Activated T-helper 1 cell treated with anti-CD3 and anti-CD28 coated beads, Interleukin-12 subunit alpha, Interleukin-12 subunit beta, Interleukin-2, Interleukin-4 antibody, amounts not matched to agents 30 ng/mL and 10 ng/mL and 1 ng/mL, durations not matched to agents 14 hours and 24 hours and 36 hours (primary cell): ENCODE measurements at regions of chr6 and their contacts with region 1.

Region 1: GRCh38 chr6:32700391-32701040 is 34.1 kb upstream of the HLA-DQB1 start:
- DNase-seq: no peak
- H3K4me3 Mint-ChIP-seq: no peak overlapping the region
- H3K27ac Mint-ChIP-seq: no peak overlapping the region
- H3K4me1 Mint-ChIP-seq: no peaks in the 10 kb centered on the region
- H3K27me3 Mint-ChIP-seq: peaks cover 43% of the 10 kb centered on the region

Region 2: DNA sequence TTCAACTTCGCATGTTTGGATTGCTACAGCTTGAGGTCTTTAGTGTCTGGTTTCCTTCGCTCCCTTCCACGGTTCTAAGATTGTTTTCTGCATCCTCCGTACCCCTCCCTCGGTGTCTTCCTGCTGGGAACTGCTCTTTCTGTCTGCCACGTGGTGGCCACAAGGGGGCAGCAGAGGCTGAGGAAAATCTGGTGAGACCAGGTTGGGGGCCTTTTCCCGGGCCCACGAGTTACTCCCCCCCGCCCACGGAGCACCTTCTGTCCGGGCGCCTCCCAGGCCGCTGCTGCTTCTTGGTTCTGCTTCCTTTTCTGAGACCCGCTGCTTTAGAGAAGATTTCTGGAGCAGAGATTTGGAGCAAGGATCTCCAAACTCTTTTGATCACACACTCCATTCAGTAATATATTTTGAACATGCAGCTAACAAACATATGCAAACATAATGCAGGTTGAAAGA is 455.5 kb before region 1 on chr6:
- intact Hi-C with region 1: loop called (anchors 1 kb)
- DNase-seq: peak; percentile 57
- H3K4me3 Mint-ChIP-seq: peak overlapping the region; percentile 9
- H3K27ac Mint-ChIP-seq: no peak overlapping the region
- H3K4me1 Mint-ChIP-seq: peaks cover 27% of the 10 kb centered on the region
- H3K27me3 Mint-ChIP-seq: peaks cover 12% of the 10 kb centered on the region

Region 3: GRCh38 chr6:32432050-32432450 is 268.5 kb before region 1 on chr6:
- intact Hi-C with region 1: loop called (anchors 1 kb)
- DNase-seq: no peak
- H3K4me3 Mint-ChIP-seq: no peak overlapping the region
- H3K27ac Mint-ChIP-seq: no peak overlapping the region
- H3K4me1 Mint-ChIP-seq: no peaks in the 10 kb centered on the region
- H3K27me3 Mint-ChIP-seq: peaks cover 31% of the 10 kb centered on the region

Region 4: DNA sequence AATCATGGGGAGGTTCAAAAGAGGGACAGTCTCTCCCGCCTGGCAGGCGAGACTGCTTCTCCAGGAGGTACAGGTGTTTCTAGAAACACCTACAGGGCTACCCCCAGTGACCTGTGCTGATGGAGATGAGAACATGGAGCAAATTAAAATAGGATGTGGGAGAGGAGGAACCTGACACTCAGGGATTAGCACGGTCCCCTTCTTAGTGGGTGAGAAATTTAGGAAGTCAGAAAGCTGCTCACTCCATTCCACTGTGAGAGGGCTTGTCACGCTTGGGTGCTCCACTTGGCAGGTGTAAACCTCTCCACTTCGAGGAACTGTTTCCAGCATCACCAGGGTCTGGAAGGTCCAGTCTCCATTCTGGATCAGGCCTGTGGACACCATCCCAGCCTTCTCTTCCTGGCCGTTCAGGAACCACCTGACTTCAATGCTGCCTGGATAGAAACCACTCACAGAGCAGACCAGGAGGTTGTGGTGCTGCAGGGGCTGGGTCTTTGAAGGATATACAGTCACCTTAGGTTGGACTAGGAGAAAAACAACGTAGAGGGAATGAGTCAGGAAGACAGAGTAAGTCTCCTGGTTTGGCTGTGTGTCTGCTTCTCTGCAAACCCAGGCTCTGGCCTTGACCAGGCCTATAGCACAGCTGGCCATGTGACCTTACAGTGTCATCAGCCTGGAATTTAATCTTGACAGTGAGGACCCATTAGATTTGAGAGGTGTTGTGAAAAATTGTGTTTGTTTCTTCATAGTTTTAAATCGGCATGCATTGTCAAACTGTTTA is 119.0 kb before region 1 on chr6:
- intact Hi-C with region 1: no loop called
- DNase-seq: no peak
- H3K4me3 Mint-ChIP-seq: no peak overlapping the region
- H3K27ac Mint-ChIP-seq: no peak overlapping the region
- H3K4me1 Mint-ChIP-seq: peaks cover 25% of the 10 kb centered on the region
- H3K27me3 Mint-ChIP-seq: peaks cover 3% of the 10 kb centered on the region

Region 5: DNA sequence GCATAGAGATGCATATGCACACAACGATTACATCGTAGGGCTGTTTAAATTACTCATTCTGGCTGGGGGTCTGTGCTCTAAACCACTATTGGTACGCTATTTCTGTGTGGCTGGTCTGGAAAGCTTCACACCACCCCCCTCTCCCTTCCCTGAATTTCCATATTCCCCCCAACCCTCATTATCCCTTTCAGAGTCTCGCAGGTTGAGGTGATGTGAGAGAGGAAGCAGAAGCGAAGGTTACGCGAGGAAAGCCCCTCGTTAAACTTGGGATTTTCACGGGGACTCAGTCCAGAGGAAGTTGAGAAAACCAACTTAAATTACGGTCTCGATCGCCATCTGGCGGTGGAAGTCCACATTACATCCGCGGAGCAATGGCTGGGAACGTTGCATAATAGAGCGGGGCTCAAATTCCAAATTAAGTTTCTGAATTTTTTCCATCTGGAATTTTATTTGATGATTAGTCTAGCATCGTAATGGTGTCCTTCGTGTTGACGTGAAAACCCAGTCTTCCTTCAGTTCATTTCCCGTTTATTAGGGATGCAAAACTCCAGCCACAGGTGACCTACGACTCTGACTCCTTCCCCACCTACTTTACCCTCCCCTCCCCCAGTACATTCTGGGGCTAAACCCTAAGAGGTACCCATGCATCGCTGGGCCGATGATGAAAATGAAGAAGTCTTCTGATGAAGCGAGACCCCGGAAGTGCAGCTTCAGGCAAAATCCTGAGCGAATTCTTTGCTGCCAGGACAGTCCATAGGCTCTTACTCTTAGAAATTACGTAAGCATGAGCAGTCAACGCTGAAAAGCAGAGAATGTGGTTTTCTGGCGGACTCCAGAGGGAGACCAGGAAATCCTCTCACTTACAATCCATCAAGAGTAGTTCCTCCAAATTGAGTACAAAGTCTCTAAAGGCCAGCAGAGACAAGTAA is 96.6 kb after region 1 on chr6:
- intact Hi-C with region 1: loop called (anchors 5 kb)
- DNase-seq: peak; percentile 65
- H3K4me3 Mint-ChIP-seq: peak overlapping the region; percentile 46
- H3K27ac Mint-ChIP-seq: no peak overlapping the region
- H3K4me1 Mint-ChIP-seq: peaks cover 31% of the 10 kb centered on the region
- H3K27me3 Mint-ChIP-seq: peaks cover 53% of the 10 kb centered on the region

Region 6: DNA sequence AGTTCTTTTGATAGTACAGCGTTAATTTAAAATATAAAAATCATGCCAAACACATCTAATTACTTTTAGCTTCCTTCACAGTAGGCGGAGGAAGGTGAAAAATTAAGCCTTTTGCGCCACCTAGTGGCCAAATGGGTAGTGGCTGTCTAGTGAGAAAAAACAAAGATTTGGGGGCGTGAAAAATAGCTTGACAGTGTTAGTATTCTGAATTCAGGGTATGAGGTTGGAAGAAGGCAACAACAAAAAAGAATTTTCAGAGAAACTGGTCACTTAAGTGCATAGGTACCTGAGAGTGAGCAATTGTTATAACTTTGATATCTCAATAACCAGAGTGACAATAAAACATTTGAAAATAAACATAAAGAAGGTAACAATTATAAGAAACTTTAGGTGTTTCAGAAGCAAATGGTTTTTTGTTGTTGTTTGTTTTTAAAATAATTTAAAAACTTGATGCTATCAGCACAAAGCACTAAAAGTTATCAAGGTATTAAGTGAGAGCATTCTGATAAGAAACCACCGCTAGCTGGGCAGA is 167.8 kb after region 1 on chr6:
- intact Hi-C with region 1: loop called (anchors 1 kb)
- DNase-seq: peak; percentile 75
- H3K4me3 Mint-ChIP-seq: no peak overlapping the region
- H3K27ac Mint-ChIP-seq: no peak overlapping the region
- H3K4me1 Mint-ChIP-seq: peaks cover 36% of the 10 kb centered on the region
- H3K27me3 Mint-ChIP-seq: peaks cover 1% of the 10 kb centered on the region